Left ventricle myocardium inferior (tissue), 1 donor: ENCODE measurements at regions of chr10 and their contacts with region 1.

Region 1: DNA sequence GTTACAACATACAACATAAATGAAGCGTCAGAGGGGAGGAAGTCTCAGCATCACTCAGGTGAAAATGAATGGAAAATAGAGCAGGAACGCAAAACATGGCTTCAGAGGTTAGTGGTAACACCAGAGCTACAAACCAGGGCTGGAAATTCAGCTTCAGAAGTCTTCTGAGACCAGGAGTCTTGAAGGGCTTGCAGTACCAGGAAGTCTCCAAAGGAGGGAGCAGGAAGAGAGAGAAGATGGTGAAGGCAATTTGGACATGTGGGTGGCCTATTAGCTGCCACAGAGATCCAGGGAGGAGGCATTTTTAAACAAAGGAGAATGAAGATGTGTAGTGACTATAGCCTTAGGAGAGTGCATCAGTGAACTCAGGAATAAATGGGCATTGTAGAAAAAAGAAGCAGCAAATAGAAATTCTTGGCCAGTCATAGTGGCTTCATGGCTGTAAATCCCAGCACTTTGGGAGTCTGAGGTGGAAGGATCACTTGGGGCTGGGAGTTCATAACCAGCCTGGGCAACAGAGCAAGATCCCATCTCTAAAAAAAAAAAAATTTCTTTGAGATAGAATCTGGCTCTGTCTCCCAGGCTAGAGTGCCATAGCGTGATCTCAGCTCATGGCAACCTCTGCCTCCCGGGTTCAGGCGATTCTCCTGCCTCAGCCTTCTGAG is 9.3 kb upstream of the TET1 start:
- DNase-seq: no peak
- H3K4me3 ChIP-seq: no peak overlapping the region
- H3K27ac ChIP-seq: no peak overlapping the region
- H3K4me1 ChIP-seq: no peaks in the 10 kb centered on the region
- H3K27me3 ChIP-seq: no peaks in the 10 kb centered on the region
- CTCF ChIP-seq: peak; percentile 87

Region 2: DNA sequence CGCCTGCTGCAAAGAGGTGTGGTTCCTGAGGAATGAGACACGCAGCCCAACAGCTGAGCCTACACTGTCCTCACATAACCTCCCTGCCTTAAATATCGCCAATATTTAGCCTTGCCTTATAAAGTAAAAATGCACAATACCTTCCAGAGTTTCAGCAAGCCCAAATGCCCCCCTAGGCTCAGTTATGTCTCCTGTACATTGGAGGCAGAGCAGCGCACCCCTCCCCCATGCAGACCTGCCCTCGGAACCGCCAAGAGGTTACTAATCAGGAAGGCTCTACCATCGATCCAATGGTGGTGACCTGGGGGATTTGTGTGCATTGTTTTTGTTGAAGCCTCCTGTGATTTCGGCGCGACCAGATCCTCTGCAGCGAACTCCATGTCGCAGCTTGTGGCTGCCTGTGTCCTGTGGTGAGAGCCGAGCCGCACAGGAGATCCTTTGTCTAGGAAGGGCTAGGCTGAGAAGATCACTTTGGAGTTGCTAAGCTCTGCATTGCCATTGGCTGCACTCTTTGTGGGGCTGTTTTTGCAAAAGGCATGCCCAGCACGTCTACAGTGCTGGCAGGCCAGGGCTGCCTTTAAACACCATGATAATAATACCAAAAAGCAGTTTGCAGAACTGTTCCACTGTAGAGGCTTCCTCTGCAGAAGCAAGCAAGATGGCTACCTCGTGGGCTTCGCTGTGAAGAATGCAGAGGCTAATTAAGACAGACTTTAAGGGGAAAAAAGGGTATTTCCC is 49.3 kb after region 1 on chr10:
- intact Hi-C with region 1: loop called (anchors 10 kb)
- DNase-seq: peak; percentile 57
- H3K4me3 ChIP-seq: peak overlapping the region; percentile 67
- H3K27ac ChIP-seq: peak overlapping the region; percentile 82
- H3K4me1 ChIP-seq: peaks cover 37% of the 10 kb centered on the region
- H3K27me3 ChIP-seq: no peaks in the 10 kb centered on the region
- CTCF ChIP-seq: no peak